Right ventricle myocardium inferior (tissue), 1 donor: ENCODE measurements at regions of chr19 and their contacts with region 1.

Region 1: DNA sequence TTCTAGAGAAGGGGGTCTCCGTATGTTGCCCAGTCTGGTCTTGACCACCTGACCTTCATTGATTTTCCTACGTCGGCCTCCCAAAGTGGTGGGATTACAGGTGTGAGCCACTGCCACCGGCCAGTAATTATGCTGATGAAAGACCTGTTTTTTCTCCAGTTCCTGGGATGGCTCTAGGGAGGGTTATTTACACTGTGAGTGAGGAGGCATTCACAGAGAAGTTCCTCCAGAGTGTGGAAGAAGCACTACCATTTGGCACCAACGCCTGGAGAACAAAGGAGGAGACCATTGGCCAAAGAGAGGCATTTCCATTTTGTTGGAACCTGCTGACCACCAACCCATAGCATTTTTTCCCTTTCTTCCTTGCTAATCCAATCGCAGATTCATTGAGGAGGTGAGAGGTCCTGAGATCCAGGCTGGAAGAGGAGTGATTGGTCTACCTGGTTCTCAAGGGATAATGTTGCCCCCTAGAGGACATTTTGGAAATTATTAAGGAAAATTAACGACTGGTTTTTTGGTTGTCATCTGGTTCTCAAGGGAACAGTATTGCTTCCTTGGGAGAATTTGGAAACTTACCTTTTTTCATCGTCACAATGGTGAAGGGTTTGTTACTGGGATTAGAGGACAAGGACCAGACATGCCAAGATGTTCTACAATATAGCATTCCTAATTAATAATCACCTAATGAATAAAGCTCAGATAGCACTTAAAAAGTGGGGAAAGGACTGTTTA is 5.5 kb upstream of the SAE1 start:
- DNase-seq: no peak
- ATAC-seq: peak; percentile 68

Region 2: GRCh38 chr19:47013041-47013517 is 112.0 kb before region 1 on chr19:
- intact Hi-C with region 1: loop called (anchors 5 kb)
- DNase-seq: peak; percentile 94
- ATAC-seq: peak; percentile 94

Region 3: DNA sequence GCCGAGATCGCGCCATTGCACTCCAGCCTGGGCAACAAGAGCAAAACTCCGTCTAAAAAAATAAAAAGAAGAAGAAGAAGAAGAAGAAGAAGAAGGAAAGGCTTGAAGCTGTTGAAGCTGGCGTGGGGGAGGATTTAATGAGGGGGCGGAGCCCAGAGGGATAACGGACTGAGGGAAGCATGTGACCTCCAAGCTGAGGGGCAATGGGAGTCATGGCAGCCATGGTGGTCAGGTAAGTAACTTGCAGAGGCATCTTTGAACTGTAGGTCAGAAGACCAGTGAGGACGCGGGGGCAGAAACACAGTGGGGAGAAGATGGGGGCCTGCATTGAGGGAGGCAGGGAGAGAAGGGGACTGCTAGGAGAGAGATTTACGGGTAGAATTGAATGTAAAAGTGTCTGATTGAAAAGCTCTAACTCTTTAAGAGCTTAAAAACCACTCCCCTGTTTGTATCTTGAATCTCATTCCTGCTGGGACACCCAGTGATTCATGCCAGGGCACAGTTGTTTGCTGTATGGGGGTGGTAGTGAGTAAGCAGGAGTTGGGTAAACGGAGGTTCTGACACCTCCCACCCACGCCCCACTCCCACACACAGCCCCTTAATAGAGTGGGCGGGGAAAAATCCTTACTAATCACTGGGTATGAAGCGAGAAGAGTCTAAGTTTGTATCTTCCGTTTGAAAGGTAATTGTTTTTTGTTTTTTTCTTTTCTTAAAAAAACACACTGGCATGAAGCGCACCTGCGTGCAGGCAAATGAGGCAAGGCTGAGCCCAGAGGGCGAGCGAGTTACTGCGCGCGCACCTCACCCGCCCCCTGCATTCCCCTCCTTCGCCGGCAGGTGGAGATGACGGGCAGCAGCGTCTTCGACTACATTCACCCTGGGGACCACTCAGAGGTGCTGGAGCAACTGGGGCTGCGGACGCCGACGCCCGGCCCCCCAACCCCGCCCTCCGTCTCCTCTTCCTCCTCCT is 89.7 kb before region 1 on chr19:
- intact Hi-C with region 1: loop called (anchors 5 kb)
- DNase-seq: peak; percentile 93
- ATAC-seq: peak; percentile 89

Region 4: DNA sequence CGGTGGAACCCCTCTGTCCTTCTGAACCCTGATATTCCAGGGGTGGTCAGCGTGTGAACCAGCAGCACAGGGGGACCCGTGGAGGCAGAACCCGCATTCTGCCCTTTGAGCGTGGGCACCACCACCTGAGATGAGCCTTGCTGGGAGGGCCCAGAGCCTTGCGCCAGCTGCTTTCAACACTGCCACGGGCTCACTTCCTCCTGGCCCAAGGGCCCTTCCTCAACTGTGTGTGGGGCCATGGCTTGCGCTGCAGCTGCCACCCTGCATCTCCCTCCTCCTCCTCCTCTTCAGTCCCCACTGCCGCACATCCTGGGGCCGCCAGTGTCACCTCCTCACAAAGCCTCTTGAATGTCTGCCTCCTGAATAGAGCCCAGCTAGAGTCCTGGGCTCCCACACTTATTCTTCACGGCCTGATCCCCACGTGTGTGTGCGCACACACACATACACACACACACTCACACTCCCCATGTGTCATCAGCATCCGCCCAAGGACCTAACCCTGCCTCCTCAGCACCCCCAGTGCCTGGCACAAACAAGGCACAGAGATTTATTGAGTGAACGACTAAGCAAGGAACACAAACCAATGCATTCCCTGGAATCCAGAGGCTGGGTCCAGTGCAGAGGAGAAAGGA is 49.8 kb before region 1 on chr19:
- intact Hi-C with region 1: loop called (anchors 1 kb)
- DNase-seq: peak; percentile 85
- ATAC-seq: no peak